SK-MEL-5 (cell line): ENCODE measurements at regions of chr9 and their contacts with region 1.

Region 1: DNA sequence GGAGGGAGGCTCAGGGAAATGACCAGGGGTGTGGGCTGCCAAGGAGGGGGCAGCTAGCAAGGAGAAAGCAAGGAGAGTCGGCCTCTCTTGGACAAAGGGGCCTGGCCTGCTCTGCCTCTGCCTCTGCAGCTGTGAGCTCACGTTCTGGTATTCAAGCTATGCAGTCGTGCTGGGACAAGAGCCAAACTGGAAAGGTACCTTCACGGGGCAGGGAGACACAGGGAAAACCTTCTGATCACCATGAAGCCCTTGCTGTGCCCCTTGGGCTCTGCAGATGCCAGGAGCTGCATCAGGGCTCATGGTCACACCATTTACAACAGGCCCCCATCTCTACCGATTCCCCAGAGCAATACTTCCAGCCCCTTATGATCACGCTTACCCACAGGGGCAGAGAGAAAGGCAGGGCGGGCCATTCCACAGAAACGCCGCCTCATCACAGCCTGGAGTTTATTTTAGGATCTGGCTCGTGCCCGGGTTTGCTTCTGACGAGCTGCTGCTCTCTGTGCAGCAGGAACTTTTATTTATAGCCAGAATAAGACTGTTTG is 63.2 kb downstream of the PRRT1B start:
- DNase-seq: no peak

Region 2: DNA sequence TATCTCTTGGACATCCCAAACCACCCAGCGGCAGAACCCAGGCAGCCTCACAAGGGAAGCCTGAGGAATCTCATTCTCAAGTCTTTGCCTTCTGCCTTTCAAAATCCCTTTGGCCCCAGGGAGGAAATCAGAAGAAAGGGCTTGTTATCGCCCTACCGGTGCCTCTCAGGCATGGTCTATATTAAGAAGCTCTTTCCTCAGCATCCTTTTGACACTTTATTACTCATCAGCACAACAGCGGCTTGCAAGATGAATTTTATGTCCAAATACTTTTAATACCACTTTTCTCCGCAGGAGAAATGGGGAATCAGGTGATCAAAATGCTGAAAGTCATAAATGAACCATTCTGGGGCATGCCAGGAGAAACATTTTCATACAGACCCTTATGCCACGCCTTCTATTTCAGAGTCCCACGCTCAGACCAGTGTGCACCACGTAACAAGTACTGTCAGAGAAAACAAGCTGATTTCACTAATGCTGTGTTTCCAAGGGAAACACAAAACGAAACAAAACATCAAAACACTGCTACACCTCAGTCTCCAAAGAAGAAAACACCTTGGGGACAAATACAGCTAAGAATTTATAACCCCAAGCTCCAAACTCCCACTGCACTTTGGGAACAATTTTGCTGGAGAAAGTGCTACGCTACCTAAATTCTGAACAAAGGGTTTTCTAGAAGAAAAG is 101.3 kb after region 1 on chr9:
- in situ Hi-C with region 1: loop called (anchors 25 kb)
- DNase-seq: peak; percentile 60